Stomach (tissue), 19 donors: ENCODE measurements at regions of chr21 and their contacts with region 1.

Region 1: GRCh38 chr21:41071258-41072171 is 96.4 kb upstream of the BACE2 start:
- DNase-seq: no peak
- H3K4me3 ChIP-seq: no peak overlapping the region
- H3K27ac ChIP-seq: no peak overlapping the region
- H3K4me1 ChIP-seq: peaks cover 5 to 10% (median 9%) of the 10 kb centered on the region in 4 donors
- H3K27me3 ChIP-seq: peaks cover 0 to 49% (median 18%) of the 10 kb centered on the region in 3 donors
- CTCF ChIP-seq: no peak
- EP300 ChIP-seq: no peak
- POLR2A ChIP-seq: no peak

Region 2: GRCh38 chr21:40466893-40467501 is 604.5 kb before region 1 on chr21:
- intact Hi-C with region 1: loop called (anchors 10 kb)
- DNase-seq: peak in 1 of 2 donors; percentile 61
- H3K4me3 ChIP-seq: no peak overlapping the region
- H3K27ac ChIP-seq: no peak overlapping the region
- H3K4me1 ChIP-seq: no peaks in the 10 kb centered on the region
- H3K27me3 ChIP-seq: peaks cover 0 to 15% (median 0%) of the 10 kb centered on the region in 3 donors
- CTCF ChIP-seq: peak in 3 of 7 experiments; percentile 27 to 53 (median 37)
- EP300 ChIP-seq: no peak
- POLR2A ChIP-seq: no peak

Region 3: DNA sequence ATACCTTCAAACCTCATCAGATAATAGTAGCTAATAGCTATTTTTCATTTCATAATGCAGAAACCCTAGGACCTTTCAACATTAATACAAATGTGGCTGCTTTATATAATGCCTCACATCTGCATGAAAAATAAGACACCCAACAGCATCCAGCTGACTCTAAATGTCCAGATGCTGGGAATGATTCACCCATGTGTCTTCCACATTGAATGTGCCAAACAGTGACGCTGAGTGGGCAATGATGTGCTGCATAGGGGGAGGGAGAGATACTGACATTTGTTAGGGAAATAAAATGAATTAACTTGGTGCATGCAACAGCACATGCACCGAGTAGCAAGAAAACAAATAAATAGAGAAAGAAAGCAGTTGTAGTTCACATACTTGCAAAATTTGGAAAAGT is 423.8 kb before region 1 on chr21:
- intact Hi-C with region 1: no loop called
- DNase-seq: no peak
- H3K4me3 ChIP-seq: no peak overlapping the region
- H3K27ac ChIP-seq: no peak overlapping the region
- H3K4me1 ChIP-seq: no peaks in the 10 kb centered on the region
- H3K27me3 ChIP-seq: no peaks in the 10 kb centered on the region
- CTCF ChIP-seq: no peak
- EP300 ChIP-seq: no peak
- POLR2A ChIP-seq: no peak

Region 4: DNA sequence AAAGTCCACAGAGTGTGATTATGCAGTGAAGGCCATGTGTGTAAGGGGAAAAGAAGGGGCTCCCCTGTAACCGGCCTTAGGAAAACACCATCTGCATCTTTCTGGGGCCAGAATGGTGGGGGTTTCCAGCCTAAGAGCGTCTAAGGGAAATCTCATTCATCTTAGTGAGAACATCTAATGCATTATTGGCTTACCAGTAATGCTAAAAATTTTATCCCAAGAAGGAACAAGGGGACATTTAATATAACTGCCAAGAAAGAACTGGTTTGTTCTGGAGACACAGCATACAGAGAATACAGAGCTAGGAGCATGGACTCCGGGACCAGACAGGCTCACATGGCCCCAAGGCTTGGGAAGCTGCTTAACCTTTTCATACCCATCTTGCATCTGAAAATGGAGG is 166.3 kb before region 1 on chr21:
- intact Hi-C with region 1: no loop called
- DNase-seq: peak in 1 of 2 donors; percentile 20
- H3K4me3 ChIP-seq: no peak overlapping the region
- H3K27ac ChIP-seq: no peak overlapping the region
- H3K4me1 ChIP-seq: peaks cover 0 to 32% (median 8%) of the 10 kb centered on the region in 4 donors
- H3K27me3 ChIP-seq: no peaks in the 10 kb centered on the region
- CTCF ChIP-seq: no peak
- EP300 ChIP-seq: no peak
- POLR2A ChIP-seq: no peak

Region 5: DNA sequence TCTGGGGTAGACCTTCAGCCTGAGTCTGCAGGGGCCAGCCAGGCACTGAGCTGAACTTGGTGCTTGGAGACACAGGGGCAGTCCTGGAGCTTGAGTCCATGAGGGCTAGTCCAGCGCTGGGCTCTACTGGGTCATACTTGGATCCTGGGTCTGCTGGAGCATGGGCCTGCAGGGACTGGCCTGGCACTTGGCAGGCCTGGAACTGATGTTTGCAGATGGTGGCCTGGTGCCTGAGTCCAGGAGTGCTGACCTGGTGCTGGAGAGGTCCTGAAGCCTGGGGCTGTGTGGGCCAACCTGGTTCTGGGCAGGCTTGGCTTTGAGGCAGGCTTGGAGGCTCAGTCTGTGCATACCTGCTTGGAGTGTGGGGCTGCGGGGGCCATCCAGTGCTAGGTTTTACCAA is 81.1 kb before region 1 on chr21:
- intact Hi-C with region 1: no loop called
- DNase-seq: no peak
- H3K4me3 ChIP-seq: no peak overlapping the region
- H3K27ac ChIP-seq: no peak overlapping the region
- H3K4me1 ChIP-seq: no peaks in the 10 kb centered on the region
- H3K27me3 ChIP-seq: no peaks in the 10 kb centered on the region
- CTCF ChIP-seq: no peak
- EP300 ChIP-seq: no peak
- POLR2A ChIP-seq: no peak

Region 6: DNA sequence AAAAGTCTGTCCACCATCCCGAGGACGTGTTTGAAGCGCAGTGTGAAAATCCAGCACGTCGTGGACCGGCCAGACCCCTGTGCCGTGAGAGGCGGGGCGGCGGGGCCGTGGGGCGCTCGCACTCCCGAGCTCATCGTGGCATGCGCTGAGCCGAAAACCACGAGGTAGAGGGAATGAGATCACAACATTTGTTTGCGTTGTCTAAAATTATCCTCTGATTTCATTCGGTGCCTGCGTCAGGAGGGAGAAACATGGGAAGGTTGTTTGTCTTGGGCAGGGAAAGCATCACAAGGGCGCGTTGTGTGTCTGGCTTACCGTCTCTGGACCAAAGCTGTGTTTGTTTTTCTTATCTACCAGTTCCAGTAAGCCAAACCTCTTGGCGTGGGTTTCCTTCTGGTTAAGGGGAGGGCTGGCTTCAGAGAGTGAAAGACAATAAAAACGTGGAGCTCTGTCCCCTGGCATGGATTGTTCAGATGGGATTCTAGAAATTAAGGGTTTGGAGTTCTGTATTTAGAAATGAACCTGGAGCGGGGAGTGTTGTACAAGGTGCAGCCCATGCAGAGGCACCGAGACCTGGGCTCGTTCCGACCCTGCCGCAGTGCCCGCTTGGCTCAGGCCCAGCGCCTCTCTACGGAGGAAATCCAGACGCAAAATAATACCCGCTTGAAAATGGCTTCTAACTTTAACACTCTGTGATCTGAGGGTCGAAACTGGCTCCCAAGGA is 176.2 kb after region 1 on chr21:
- intact Hi-C with region 1: no loop called
- DNase-seq: peak; percentile 29 to 81
- H3K4me3 ChIP-seq: no peak overlapping the region
- H3K27ac ChIP-seq: peak overlapping the region; percentile 71 to 82 (median 76)
- H3K4me1 ChIP-seq: peaks cover 0 to 19% (median 17%) of the 10 kb centered on the region in 4 donors
- H3K27me3 ChIP-seq: no peaks in the 10 kb centered on the region
- CTCF ChIP-seq: no peak
- EP300 ChIP-seq: no peak
- POLR2A ChIP-seq: peak in 1 of 4 donors; percentile 8